HCT116 (cell line): ENCODE measurements at regions of chr12 and their contacts with region 1.

Region 1: GRCh38 chr12:122190842-122191668 is 8.1 kb downstream of the LRRC43 start:
- DNase-seq: peak; percentile 72
- ATAC-seq: peak; percentile 98
- H3K4me3 ChIP-seq: no peak overlapping the region
- H3K27ac ChIP-seq: no peak overlapping the region
- H3K4me1 ChIP-seq: no peaks in the 10 kb centered on the region
- H3K27me3 ChIP-seq: no peaks in the 10 kb centered on the region
- CTCF ChIP-seq: peak; percentile 89 to 95 (median 91)
- POLR2A ChIP-seq: no peak
- RAD21 ChIP-seq: peak; percentile 93

Region 2: GRCh38 chr12:122130150-122130549 is 60.9 kb before region 1 on chr12:
- CTCF ChIA-PET with region 1: interaction called, 11 read pairs
- POLR2A ChIA-PET with region 1: interaction called, 3 read pairs
- RAD21 ChIA-PET with region 1: interaction called in 1 of 2 experiments, 4 read pairs
- intact Hi-C with region 1: loop called (anchors 2 kb)
- DNase-seq: peak; percentile 28
- ATAC-seq: peak; percentile 81
- H3K4me3 ChIP-seq: no peak overlapping the region
- H3K27ac ChIP-seq: peak overlapping the region; percentile 79
- H3K4me1 ChIP-seq: peaks cover 12 to 20% of the 10 kb centered on the region in 2 experiments
- H3K27me3 ChIP-seq: no peaks in the 10 kb centered on the region
- CTCF ChIP-seq: no peak
- POLR2A ChIP-seq: no peak
- RAD21 ChIP-seq: no peak

Region 3: DNA sequence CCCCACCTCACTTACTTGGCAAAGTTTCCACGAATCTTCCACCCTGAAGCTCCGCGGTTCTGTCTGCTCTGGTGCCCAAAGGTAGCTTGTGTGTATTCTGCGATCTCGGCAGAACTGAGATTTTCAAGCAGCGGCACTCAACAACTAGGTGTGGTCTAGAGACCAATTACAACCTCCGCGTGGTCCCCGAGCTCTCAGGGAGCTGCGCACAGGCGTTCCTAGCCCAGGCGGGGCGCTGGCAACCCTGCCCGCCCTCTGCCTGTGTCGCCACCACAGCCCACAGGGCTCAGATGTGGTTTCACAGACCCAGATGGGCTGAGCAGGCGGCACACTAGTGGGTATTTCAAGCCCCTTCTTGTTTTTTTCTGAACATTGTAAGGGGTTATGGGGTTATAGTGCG is 36.3 kb after region 1 on chr12:
- CTCF ChIA-PET with region 1: no interaction called
- POLR2A ChIA-PET with region 1: no interaction called
- RAD21 ChIA-PET with region 1: no interaction called
- intact Hi-C with region 1: no loop called
- DNase-seq: no peak
- ATAC-seq: no peak
- H3K4me3 ChIP-seq: no peak overlapping the region
- H3K27ac ChIP-seq: no peak overlapping the region
- H3K4me1 ChIP-seq: peaks cover 7 to 21% of the 10 kb centered on the region in 2 experiments
- H3K27me3 ChIP-seq: no peaks in the 10 kb centered on the region
- CTCF ChIP-seq: no peak
- POLR2A ChIP-seq: no peak
- RAD21 ChIP-seq: no peak